ENCODE measurements at regions of chr14 and their contacts with region 1.

Region 1: GRCh38 chr14:22713631-22713950 is 52.9 kb upstream of the OXA1L start:
- DNase-seq: no peak
- ATAC-seq: no peak
- H3K4me3 ChIP-seq: peak overlapping the region; percentile 70
- H3K27ac ChIP-seq: no peak overlapping the region; the same call in 1 of the 2 replicates
- H3K4me1 ChIP-seq: peaks cover 3% of the 10 kb centered on the region; the same call in 1 of the 2 replicates
- H3K27me3 ChIP-seq: no peaks in the 10 kb centered on the region
- CTCF ChIP-seq: no peak
- EP300 ChIP-seq: no peak
- POLR2A ChIP-seq: no peak
- RAD21 ChIP-seq: no peak

Region 2: DNA sequence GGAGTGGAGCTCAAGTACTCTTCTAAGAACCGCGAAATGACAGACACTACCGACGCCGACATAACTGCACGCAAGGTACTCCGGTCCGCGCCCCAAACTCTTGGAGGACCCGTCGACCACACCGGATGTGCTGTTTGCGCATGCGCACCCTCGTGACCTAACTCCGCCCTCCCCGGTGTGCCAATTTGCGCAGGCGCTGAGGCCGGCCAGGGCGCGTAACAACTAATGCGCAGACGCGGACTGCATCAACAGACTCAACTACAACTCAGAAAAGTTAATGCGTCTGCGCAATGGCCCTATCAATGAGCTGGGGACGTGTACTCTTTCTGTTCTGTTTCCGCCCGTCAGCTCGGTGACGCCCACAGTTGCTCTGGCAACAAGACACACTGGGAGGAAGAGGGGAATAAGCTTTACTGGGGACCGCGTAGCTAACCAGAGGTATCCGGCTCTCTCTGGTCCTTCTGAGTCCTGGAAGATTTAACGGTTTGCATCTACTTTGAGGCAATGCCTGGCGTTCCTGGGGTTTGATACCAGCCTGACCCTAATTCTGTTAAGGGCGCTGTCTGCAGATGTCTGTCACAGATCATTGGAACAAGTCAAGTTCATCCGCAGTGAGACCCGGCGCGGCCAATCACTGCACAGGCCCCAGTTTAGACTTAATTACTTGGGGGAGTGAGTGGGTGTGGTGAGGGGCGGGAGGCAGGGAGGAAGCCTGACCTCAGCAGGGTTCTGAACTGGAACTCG is 124.3 kb before region 1 on chr14 and contains the start of gene DAD1:
- CTCF ChIA-PET with region 1: no interaction called
- POLR2A ChIA-PET with region 1: no interaction called
- RAD21 ChIA-PET with region 1: no interaction called
- SMC1A ChIA-PET with region 1: no interaction called
- in situ Hi-C with region 1: no loop called
- intact Hi-C with region 1: loop called (anchors 5 kb)
- DNase-seq: peak; percentile 100
- ATAC-seq: peak; percentile 93
- H3K4me3 ChIP-seq: peak within 1 kb of the TSS; percentile 92
- H3K27ac ChIP-seq: peak within 1 kb of the TSS; percentile 91
- H3K4me1 ChIP-seq: peaks cover 20% of the 10 kb centered on the region
- H3K27me3 ChIP-seq: no peaks in the 10 kb centered on the region; a peak in 1 of 4 replicates
- CTCF ChIP-seq: 0 out of 6 replicates have a peak, but pooled peaks of 1 of the 3 experiments have one; percentile 13
- EP300 ChIP-seq: no peak; a peak in 1 of 4 replicates
- POLR2A ChIP-seq: peak; percentile 98
- RAD21 ChIP-seq: no peak
- polyA plus RNA-seq, gene DAD1: 711 to 920 TPM

Measured in GM12878 (cell line).